Activated B cell treated with CpG ODN at 0.5 μM for 24 hours (primary cell): ENCODE measurements at regions of chr14 and their contacts with region 1.

Region 1: GRCh38 chr14:101809671-101810514 is 48.4 kb downstream of the PPP2R5C start:
- DNase-seq: peak; percentile 66
- ATAC-seq: peak; percentile 91
- H3K4me3 Mint-ChIP-seq: peak overlapping the region; percentile 97
- H3K27ac Mint-ChIP-seq: peak overlapping the region; percentile 99
- H3K4me1 Mint-ChIP-seq: peaks cover 55% of the 10 kb centered on the region
- H3K27me3 Mint-ChIP-seq: no peaks in the 10 kb centered on the region
- CTCF ChIP-seq: no peak

Region 2: GRCh38 chr14:101761032-101761880 is 48.6 kb before region 1 on chr14 and contains the start of gene PPP2R5C:
- CTCF ChIA-PET with region 1: no interaction called
- POLR2A ChIA-PET with region 1: interaction called, 14 read pairs
- intact Hi-C with region 1: loop called (anchors 1 kb)
- DNase-seq: peak; percentile 81
- ATAC-seq: peak; percentile 63
- H3K4me3 Mint-ChIP-seq: peak within 1 kb of the TSS; percentile 88
- H3K27ac Mint-ChIP-seq: peak within 1 kb of the TSS; percentile 77
- H3K4me1 Mint-ChIP-seq: peaks cover 18% of the 10 kb centered on the region
- H3K27me3 Mint-ChIP-seq: no peaks in the 10 kb centered on the region
- CTCF ChIP-seq: no peak
- total RNA-seq, gene PPP2R5C: 197 and 227 TPM in 2 replicates

Region 3: DNA sequence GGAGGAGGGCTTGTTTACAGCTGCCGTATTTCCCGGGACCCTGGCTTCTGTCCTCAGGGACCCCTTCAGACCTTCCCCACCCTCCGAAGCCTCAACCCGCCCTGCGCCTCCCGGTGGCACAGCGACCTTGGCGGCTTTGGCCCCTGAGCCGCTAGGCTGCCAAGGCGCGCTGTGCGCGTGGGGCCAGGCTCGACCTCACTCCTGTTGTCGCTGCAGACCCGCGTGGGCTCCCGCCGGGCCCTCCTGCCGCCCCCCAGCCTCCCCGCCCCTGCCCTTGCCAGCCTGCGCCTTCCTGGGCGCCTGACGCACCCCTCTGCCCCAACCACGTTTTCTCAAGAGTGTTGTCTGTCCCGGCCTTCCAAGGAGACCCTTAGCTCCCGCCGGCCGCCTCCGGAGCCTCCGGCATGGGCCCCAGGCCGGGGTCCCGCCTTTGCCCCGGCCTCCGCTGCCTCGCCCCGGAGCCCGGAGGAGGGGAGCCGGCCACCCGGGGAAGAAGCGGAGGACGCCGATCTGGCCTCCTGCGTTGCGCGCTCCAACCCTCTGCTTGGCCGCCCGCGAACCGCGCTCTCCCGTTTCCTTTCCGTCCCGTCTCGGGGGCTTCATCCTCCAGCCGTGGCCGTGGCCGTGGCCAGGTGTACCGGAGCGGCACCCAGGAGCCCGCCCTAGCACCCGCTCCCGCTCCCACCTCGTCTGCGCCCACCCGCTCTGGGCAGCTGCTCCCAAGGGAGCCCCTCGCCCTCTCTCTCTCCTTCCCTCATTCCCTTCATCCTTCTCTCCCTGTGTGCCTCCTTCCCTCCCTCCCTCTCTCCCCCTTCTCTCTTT is 28.4 kb before region 1 on chr14:
- CTCF ChIA-PET with region 1: no interaction called
- POLR2A ChIA-PET with region 1: interaction called, 52 read pairs
- intact Hi-C with region 1: no loop called
- DNase-seq: no peak
- ATAC-seq: peak; percentile 61
- H3K4me3 Mint-ChIP-seq: peak overlapping the region; percentile 73
- H3K27ac Mint-ChIP-seq: no peak overlapping the region
- H3K4me1 Mint-ChIP-seq: peaks cover 34% of the 10 kb centered on the region
- H3K27me3 Mint-ChIP-seq: peaks cover 1% of the 10 kb centered on the region
- CTCF ChIP-seq: no peak

Region 4: GRCh38 chr14:101834800-101835547 is 25.1 kb after region 1 on chr14:
- CTCF ChIA-PET with region 1: interaction called, 9 read pairs
- POLR2A ChIA-PET with region 1: interaction called, 313 read pairs
- intact Hi-C with region 1: loop called (anchors 1 kb)
- DNase-seq: no peak
- ATAC-seq: no peak
- H3K4me3 Mint-ChIP-seq: no peak overlapping the region
- H3K27ac Mint-ChIP-seq: peak overlapping the region; percentile 46
- H3K4me1 Mint-ChIP-seq: peaks cover 70% of the 10 kb centered on the region
- H3K27me3 Mint-ChIP-seq: no peaks in the 10 kb centered on the region
- CTCF ChIP-seq: no peak

Region 5: DNA sequence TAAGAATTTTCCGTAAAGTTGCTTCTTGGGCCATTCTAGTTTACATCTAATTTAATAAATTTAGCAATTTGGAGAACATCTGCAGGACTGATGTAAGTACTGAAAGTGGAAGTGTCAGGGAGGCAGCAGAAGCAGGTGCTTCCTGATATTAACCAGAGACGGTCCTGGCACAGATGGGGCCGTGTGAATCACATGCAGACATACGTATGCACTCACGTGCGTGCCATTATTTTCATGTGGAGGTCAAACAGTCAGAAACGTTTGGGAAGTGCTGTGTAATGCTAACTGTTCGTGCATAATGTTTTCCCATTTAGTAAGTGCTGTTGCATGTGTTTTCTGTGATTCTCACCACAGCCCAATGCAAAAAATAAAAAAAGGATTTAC is 66.7 kb after region 1 on chr14:
- CTCF ChIA-PET with region 1: no interaction called
- POLR2A ChIA-PET with region 1: interaction called, 7 read pairs
- intact Hi-C with region 1: loop called (anchors 1 kb)
- DNase-seq: peak; percentile 60
- ATAC-seq: peak; percentile 84
- H3K4me3 Mint-ChIP-seq: peak overlapping the region; percentile 72
- H3K27ac Mint-ChIP-seq: peak overlapping the region; percentile 96
- H3K4me1 Mint-ChIP-seq: peaks cover 84% of the 10 kb centered on the region
- H3K27me3 Mint-ChIP-seq: no peaks in the 10 kb centered on the region
- CTCF ChIP-seq: no peak

Region 6: DNA sequence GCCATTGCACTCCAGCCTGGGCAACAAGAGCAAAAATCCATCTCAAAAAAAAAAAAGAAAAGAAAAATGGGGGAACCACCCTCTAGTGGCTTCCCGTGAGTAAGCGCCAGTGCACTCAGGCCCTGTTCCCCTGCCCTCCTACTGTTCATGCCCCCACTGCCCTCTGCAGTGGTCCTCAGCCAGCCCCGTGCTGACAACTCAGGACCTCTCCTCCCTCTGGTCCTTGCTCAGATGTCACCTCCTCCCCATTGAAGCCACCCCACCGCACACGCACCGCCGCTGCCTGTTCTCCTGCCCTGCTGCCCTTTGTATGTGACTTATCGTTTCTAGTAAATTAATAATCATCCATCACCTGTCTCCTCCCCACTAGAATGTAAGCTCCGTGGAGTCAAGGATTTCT is 95.7 kb after region 1 on chr14:
- CTCF ChIA-PET with region 1: no interaction called
- POLR2A ChIA-PET with region 1: no interaction called
- intact Hi-C with region 1: no loop called
- DNase-seq: no peak
- ATAC-seq: no peak
- H3K4me3 Mint-ChIP-seq: no peak overlapping the region
- H3K27ac Mint-ChIP-seq: no peak overlapping the region
- H3K4me1 Mint-ChIP-seq: no peaks in the 10 kb centered on the region
- H3K27me3 Mint-ChIP-seq: no peaks in the 10 kb centered on the region
- CTCF ChIP-seq: no peak

Region 7: GRCh38 chr14:101997429-101998336 is 187.8 kb after region 1 on chr14:
- CTCF ChIA-PET with region 1: no interaction called
- POLR2A ChIA-PET with region 1: no interaction called
- intact Hi-C with region 1: no loop called
- DNase-seq: no peak
- ATAC-seq: no peak
- H3K4me3 Mint-ChIP-seq: no peak overlapping the region
- H3K27ac Mint-ChIP-seq: no peak overlapping the region
- H3K4me1 Mint-ChIP-seq: peaks cover 11% of the 10 kb centered on the region
- H3K27me3 Mint-ChIP-seq: no peaks in the 10 kb centered on the region
- CTCF ChIP-seq: no peak